ENCODE measurements at regions of chr4 and their contacts with region 1.

Region 1: GRCh38 chr4:55554453-55555030 is 7.8 kb upstream of the CLOCK start:
- DNase-seq: no peak
- H3K4me3 ChIP-seq: no peak overlapping the region
- H3K27ac ChIP-seq: no peak overlapping the region
- H3K4me1 ChIP-seq: no peaks in the 10 kb centered on the region
- H3K27me3 ChIP-seq: no peaks in the 10 kb centered on the region
- CTCF ChIP-seq: peak in 2 of 3 experiments; percentile 30 to 57

Region 2: DNA sequence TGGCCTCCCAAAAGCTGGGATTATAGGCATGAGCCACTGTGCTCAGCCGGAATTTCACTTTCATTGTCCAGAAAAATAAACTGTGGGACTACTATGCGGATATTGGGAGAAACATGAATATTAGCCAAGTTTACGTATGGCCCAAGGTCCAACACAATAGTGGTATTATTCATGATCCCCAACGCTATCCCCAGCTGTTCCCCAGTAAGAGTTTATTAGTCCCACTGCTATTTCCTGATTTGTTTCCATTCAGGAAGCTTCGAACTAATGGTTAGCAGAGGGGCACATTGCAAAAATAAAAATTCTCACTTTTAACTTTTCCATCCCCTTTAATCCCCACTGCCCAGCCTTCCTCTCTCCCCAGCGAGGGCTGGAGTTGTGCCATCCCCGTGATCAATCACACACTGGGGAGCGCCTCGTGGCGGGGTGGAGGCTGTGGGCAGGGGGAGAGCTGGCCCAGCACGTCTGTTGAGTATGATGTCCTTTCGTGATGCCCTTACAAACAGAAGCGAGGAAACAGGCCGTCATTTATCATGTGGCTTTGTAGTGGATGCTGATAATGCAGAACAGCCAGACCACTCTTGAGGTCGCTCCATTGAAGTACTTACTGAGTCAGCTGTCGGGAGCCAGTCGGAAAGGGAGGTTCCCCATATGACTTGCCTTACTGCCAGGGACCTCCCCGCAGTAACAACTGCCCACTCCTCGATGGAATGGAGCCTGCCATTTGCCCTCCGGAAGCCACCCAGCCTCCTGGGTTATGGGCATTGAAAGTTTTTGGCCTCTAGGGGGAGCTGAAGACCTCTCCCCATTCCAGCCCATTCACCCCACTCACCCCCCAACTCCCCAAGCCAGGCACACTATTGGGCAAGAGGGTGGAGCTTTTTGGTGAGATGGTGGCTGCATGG is 546.1 kb before region 1 on chr4:
- intact Hi-C with region 1: loop called (anchors 10 kb)
- DNase-seq: no peak
- H3K4me3 ChIP-seq: no peak overlapping the region
- H3K27ac ChIP-seq: no peak overlapping the region
- H3K4me1 ChIP-seq: peaks cover 0 to 6% of the 10 kb centered on the region in 2 donors
- H3K27me3 ChIP-seq: no peaks in the 10 kb centered on the region
- CTCF ChIP-seq: peak in 1 of 3 experiments; percentile 9

Region 3: DNA sequence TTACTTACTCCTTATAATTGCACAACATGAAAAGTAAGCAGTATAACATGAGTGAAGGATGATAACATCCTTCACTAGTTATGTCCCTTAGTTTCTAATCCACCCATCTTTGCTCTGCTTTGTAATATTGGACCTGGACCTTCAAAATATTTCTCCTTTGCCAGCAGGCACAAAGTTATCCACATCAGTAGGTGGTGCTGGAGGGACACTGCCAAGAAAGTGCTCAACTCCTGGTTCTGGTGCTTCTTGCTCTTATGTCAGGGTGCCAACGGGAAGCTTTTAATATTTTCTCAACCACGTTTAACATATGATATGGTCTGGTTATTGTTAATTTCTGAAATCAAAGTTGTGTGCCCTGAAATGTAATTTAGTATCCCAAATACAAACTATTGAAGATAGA is 109.7 kb before region 1 on chr4:
- intact Hi-C with region 1: loop called (anchors 5 kb)
- DNase-seq: no peak
- H3K4me3 ChIP-seq: no peak overlapping the region
- H3K27ac ChIP-seq: no peak overlapping the region
- H3K4me1 ChIP-seq: no peaks in the 10 kb centered on the region
- H3K27me3 ChIP-seq: no peaks in the 10 kb centered on the region
- CTCF ChIP-seq: peak in 1 of 3 experiments; percentile 26

Region 4: GRCh38 chr4:55754754-55755350 is 200.3 kb after region 1 on chr4:
- intact Hi-C with region 1: no loop called
- DNase-seq: no peak
- H3K4me3 ChIP-seq: no peak overlapping the region
- H3K27ac ChIP-seq: no peak overlapping the region
- H3K4me1 ChIP-seq: no peaks in the 10 kb centered on the region
- H3K27me3 ChIP-seq: no peaks in the 10 kb centered on the region
- CTCF ChIP-seq: no peak